WTC11 (cell line): ENCODE measurements at regions of chr2 and their contacts with region 1.

Region 1: GRCh38 chr2:172674034-172674967 is 61.3 kb upstream of the RAPGEF4 start:
- DNase-seq: peak; percentile 81
- ATAC-seq: peak; percentile 100
- H3K4me3 Mint-ChIP-seq: peak overlapping the region; percentile 11
- H3K27ac Mint-ChIP-seq: no peak overlapping the region
- H3K4me1 Mint-ChIP-seq: peaks cover 8% of the 10 kb centered on the region
- H3K27me3 Mint-ChIP-seq: peaks cover 30% of the 10 kb centered on the region
- CTCF ChIP-seq: peak; percentile 50

Region 2: DNA sequence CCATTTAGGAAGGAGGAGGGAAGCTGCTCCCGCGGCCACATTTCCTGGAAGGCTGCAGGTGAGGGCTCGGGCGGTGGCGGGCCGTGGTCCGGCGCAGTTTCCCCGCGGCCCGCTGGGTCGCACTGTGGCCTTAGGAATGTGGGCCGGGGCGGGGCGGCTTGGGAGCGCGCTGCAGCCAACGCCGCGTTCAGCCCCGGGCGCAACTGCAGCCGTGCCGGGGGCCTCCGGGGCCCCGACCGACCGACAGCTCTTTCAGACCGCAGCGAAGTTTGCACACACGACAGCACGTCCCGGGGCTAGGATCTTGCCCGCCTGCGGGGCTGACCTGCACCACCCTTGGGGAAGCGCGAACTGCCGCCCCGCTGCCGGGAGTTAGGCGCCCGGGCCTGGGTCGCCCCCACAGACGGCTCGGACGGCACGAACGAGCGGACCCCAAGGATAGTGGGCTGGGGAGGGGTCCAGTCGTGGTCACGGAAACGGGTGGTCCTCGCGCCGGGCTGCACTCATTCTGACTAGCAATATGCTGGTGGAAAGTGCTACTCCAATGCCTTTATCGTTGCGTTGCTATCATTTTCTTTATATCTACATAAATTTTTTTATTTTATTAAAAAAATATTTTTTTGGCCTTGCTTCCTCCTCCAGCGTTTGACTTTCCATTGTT is 501.7 kb before region 1 on chr2:
- CTCF ChIA-PET with region 1: interaction called, 20 read pairs
- POLR2A ChIA-PET with region 1: no interaction called
- DNase-seq: peak; percentile 87
- ATAC-seq: peak; percentile 99
- H3K4me3 Mint-ChIP-seq: peak overlapping the region; percentile 67
- H3K27ac Mint-ChIP-seq: no peak overlapping the region
- H3K4me1 Mint-ChIP-seq: peaks cover 19% of the 10 kb centered on the region
- H3K27me3 Mint-ChIP-seq: peaks cover 10% of the 10 kb centered on the region
- CTCF ChIP-seq: 0 out of 2 replicates have a peak, but pooled peaks have one; percentile 44

Region 3: GRCh38 chr2:172555522-172556283 is 118.6 kb before region 1 on chr2 and contains the start of gene PDK1:
- CTCF ChIA-PET with region 1: interaction called, 22 read pairs
- POLR2A ChIA-PET with region 1: interaction called, 3 read pairs
- DNase-seq: peak; percentile 83
- ATAC-seq: peak; percentile 84
- H3K4me3 Mint-ChIP-seq: peak within 1 kb of the TSS; percentile 88
- H3K27ac Mint-ChIP-seq: peak within 1 kb of the TSS; percentile 98
- H3K4me1 Mint-ChIP-seq: peaks cover 69% of the 10 kb centered on the region
- H3K27me3 Mint-ChIP-seq: no peaks in the 10 kb centered on the region
- CTCF ChIP-seq: no peak
- total RNA-seq, gene PDK1: 22.9 to 31.6 TPM (median 30.5 TPM) in 3 replicates

Region 4: GRCh38 chr2:172613040-172613439 is 61.3 kb before region 1 on chr2:
- CTCF ChIA-PET with region 1: interaction called, 51 read pairs
- POLR2A ChIA-PET with region 1: no interaction called
- DNase-seq: no peak
- ATAC-seq: peak; percentile 90
- H3K4me3 Mint-ChIP-seq: no peak overlapping the region
- H3K27ac Mint-ChIP-seq: no peak overlapping the region; the same call in 1 of the 2 replicates
- H3K4me1 Mint-ChIP-seq: peaks cover 5% of the 10 kb centered on the region; the same call in 1 of the 2 replicates
- H3K27me3 Mint-ChIP-seq: no peaks in the 10 kb centered on the region
- CTCF ChIP-seq: no peak

Region 5: GRCh38 chr2:172655091-172655837 is 19.0 kb before region 1 on chr2:
- CTCF ChIA-PET with region 1: interaction called, 20 read pairs
- POLR2A ChIA-PET with region 1: no interaction called
- DNase-seq: no peak
- ATAC-seq: no peak
- H3K4me3 Mint-ChIP-seq: no peak overlapping the region
- H3K27ac Mint-ChIP-seq: no peak overlapping the region
- H3K4me1 Mint-ChIP-seq: no peaks in the 10 kb centered on the region
- H3K27me3 Mint-ChIP-seq: peaks cover 11% of the 10 kb centered on the region
- CTCF ChIP-seq: no peak

Region 6: GRCh38 chr2:172693037-172693436 is 18.7 kb after region 1 on chr2:
- CTCF ChIA-PET with region 1: interaction called, 29 read pairs
- POLR2A ChIA-PET with region 1: no interaction called
- DNase-seq: no peak
- ATAC-seq: no peak
- H3K4me3 Mint-ChIP-seq: no peak overlapping the region
- H3K27ac Mint-ChIP-seq: no peak overlapping the region
- H3K4me1 Mint-ChIP-seq: no peaks in the 10 kb centered on the region
- H3K27me3 Mint-ChIP-seq: no peaks in the 10 kb centered on the region
- CTCF ChIP-seq: no peak

Region 7: GRCh38 chr2:172821370-172822347 is 147.4 kb after region 1 on chr2:
- CTCF ChIA-PET with region 1: no interaction called
- POLR2A ChIA-PET with region 1: no interaction called
- DNase-seq: no peak
- ATAC-seq: no peak
- H3K4me3 Mint-ChIP-seq: no peak overlapping the region
- H3K27ac Mint-ChIP-seq: no peak overlapping the region
- H3K4me1 Mint-ChIP-seq: no peaks in the 10 kb centered on the region
- H3K27me3 Mint-ChIP-seq: no peaks in the 10 kb centered on the region
- CTCF ChIP-seq: no peak

Region 8: DNA sequence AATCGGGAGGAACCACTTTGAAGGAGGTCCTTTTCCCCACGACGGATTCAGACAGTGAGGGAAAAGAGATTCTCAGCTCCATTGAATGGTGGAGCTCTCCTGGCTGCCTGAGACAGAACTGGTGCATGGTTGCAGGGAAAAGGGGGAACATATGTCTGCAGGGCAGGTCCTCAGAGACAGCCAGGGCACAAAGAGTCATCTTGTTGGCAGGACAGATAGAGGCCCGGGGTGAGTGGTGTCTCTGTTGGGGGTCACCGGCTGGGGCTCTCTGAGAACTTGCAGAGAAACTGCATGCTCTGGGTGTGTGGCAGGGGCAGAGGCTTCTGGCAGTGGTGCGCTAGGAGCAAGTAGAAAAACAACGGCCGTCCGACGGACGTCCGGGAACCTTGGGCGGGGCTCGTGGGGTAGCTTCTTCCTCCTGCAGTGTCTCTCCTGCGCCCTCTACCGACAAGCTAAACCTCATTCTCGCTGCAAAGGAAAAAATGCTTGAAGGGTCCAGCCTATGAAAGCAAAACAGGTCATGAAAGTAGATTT is 774.7 kb after region 1 on chr2:
- CTCF ChIA-PET with region 1: no interaction called
- POLR2A ChIA-PET with region 1: no interaction called
- DNase-seq: peak; percentile 94
- ATAC-seq: peak; percentile 97
- H3K4me3 Mint-ChIP-seq: peak overlapping the region; percentile 61
- H3K27ac Mint-ChIP-seq: peak overlapping the region; percentile 82
- H3K4me1 Mint-ChIP-seq: peaks cover 21% of the 10 kb centered on the region
- H3K27me3 Mint-ChIP-seq: peaks cover 3% of the 10 kb centered on the region; the same call in 1 of the 2 replicates
- CTCF ChIP-seq: peak; percentile 68; the same call in 1 of the 2 replicates